B cell (primary cell): ENCODE measurements at regions of chr20 and their contacts with region 1.

Region 1: GRCh38 chr20:833450-834150 is at the start of gene FAM110A:
- DNase-seq: peak; percentile 98
- ATAC-seq: peak; percentile 93
- H3K4me3 ChIP-seq: peak within 1 kb of the TSS; percentile 72 to 95 (median 88)
- H3K4me3 Mint-ChIP-seq: peak within 1 kb of the TSS; percentile 81
- H3K27ac ChIP-seq: peak within 1 kb of the TSS; percentile 81 to 96
- H3K27ac Mint-ChIP-seq: peak within 1 kb of the TSS; percentile 87
- H3K4me1 ChIP-seq: peaks cover 31% of the 10 kb centered on the region in 2 donors
- H3K4me1 Mint-ChIP-seq: peaks cover 37% of the 10 kb centered on the region
- H3K27me3 ChIP-seq: no peaks in the 10 kb centered on the region
- H3K27me3 Mint-ChIP-seq: no peaks in the 10 kb centered on the region
- CTCF ChIP-seq: no peak
- total RNA-seq, gene FAM110A: 18.4 and 19.6 TPM in 2 replicates

Region 2: DNA sequence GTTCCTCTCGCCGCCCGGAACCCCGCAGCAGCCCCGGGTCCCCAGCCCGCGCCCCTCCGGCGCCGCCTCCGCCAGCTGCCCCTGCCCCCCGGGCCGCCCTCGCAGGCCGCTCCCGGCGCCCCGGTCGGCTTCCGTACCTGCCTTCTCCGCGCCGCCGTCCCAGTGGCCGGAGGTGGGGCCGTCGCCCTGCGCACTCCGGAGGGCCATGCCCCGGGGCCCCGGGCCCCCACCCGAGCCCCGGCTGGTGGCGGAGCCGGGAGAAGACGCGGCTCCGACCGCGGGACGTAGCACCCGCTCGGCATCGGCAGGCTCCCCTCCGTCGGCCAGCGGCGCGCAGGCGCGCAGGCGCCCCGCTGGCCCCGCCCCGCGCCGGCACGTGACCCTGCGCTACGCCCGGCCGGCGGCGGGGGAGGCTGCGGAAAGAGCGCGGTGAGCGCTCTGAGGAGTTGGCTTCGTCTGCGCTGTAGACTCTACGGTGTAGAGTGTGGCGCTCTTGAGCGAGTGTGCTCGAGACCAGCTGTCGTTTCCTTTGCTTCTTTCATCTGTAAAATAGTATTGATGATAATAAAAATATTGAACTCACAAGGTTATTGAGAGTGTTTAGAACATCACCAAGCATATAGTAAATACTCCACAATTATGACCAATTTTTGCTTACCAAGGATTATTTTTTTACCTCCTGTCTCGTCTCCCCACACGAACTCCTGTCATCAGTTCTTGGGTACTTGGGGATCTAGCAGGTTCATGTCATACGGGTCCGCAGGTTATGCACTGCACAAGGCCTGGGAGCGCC is 371.2 kb before region 1 on chr20 and contains the start of gene TBC1D20:
- CTCF ChIA-PET with region 1: no interaction called
- POLR2A ChIA-PET with region 1: no interaction called
- intact Hi-C with region 1: loop called (anchors 2 kb)
- DNase-seq: peak; percentile 94
- ATAC-seq: peak; percentile 95
- H3K4me3 ChIP-seq: peak within 1 kb of the TSS; percentile 58 to 83 (median 76)
- H3K4me3 Mint-ChIP-seq: peak within 1 kb of the TSS; percentile 94
- H3K27ac ChIP-seq: peak within 1 kb of the TSS; percentile 61 to 85
- H3K27ac Mint-ChIP-seq: peak within 1 kb of the TSS; percentile 95
- H3K4me1 ChIP-seq: peaks cover 14 to 17% of the 10 kb centered on the region in 2 donors
- H3K4me1 Mint-ChIP-seq: peaks cover 37% of the 10 kb centered on the region
- H3K27me3 ChIP-seq: peaks cover 0 to 1% (median 0%) of the 10 kb centered on the region in 4 experiments
- H3K27me3 Mint-ChIP-seq: peaks cover 3% of the 10 kb centered on the region
- CTCF ChIP-seq: no peak
- total RNA-seq, gene TBC1D20: 37.9 and 40.0 TPM in 2 replicates

Region 3: GRCh38 chr20:653110-653589 is 180.4 kb before region 1 on chr20 and contains the start of gene SRXN1:
- CTCF ChIA-PET with region 1: no interaction called
- POLR2A ChIA-PET with region 1: no interaction called
- intact Hi-C with region 1: loop called (anchors 2 kb)
- DNase-seq: peak; percentile 83
- ATAC-seq: peak; percentile 94
- H3K4me3 ChIP-seq: peak within 1 kb of the TSS; percentile 41 to 67 (median 53)
- H3K4me3 Mint-ChIP-seq: peak within 1 kb of the TSS; percentile 79
- H3K27ac ChIP-seq: no peak within 1 kb of the TSS
- H3K27ac Mint-ChIP-seq: peak within 1 kb of the TSS; percentile 69
- H3K4me1 ChIP-seq: peaks cover 10 to 18% of the 10 kb centered on the region in 2 donors
- H3K4me1 Mint-ChIP-seq: peaks cover 20% of the 10 kb centered on the region
- H3K27me3 ChIP-seq: peaks cover 0 to 8% (median 0%) of the 10 kb centered on the region in 4 experiments
- H3K27me3 Mint-ChIP-seq: peaks cover 10% of the 10 kb centered on the region
- CTCF ChIP-seq: peak; percentile 70
- total RNA-seq, gene SRXN1: 3.7 and 4.5 TPM in 2 replicates

Region 4: GRCh38 chr20:815914-816606 is 17.5 kb before region 1 on chr20:
- CTCF ChIA-PET with region 1: interaction called, 30 read pairs
- POLR2A ChIA-PET with region 1: no interaction called
- intact Hi-C with region 1: no loop called
- DNase-seq: peak; percentile 80
- ATAC-seq: peak; percentile 78
- H3K4me3 ChIP-seq: no peak overlapping the region
- H3K4me3 Mint-ChIP-seq: no peak overlapping the region
- H3K27ac ChIP-seq: no peak overlapping the region
- H3K27ac Mint-ChIP-seq: no peak overlapping the region
- H3K4me1 ChIP-seq: peaks cover 0 to 3% of the 10 kb centered on the region in 2 donors
- H3K4me1 Mint-ChIP-seq: no peaks in the 10 kb centered on the region
- H3K27me3 ChIP-seq: no peaks in the 10 kb centered on the region
- H3K27me3 Mint-ChIP-seq: peaks cover 27% of the 10 kb centered on the region
- CTCF ChIP-seq: peak; percentile 99

Region 5: GRCh38 chr20:844473-845225 is 11.0 kb after region 1 on chr20:
- CTCF ChIA-PET with region 1: interaction called, 46 read pairs
- POLR2A ChIA-PET with region 1: interaction called, 15 read pairs
- intact Hi-C with region 1: loop called (anchors 1 kb)
- DNase-seq: peak; percentile 92
- ATAC-seq: peak; percentile 98
- H3K4me3 ChIP-seq: peak overlapping the region in 4 of 5 experiments; percentile 65 to 77 (median 68)
- H3K4me3 Mint-ChIP-seq: peak overlapping the region; percentile 86
- H3K27ac ChIP-seq: peak overlapping the region; percentile 10 to 80
- H3K27ac Mint-ChIP-seq: peak overlapping the region; percentile 71
- H3K4me1 ChIP-seq: peaks cover 64% of the 10 kb centered on the region in 2 donors
- H3K4me1 Mint-ChIP-seq: peaks cover 60% of the 10 kb centered on the region
- H3K27me3 ChIP-seq: peaks cover 0 to 19% (median 6%) of the 10 kb centered on the region in 4 experiments
- H3K27me3 Mint-ChIP-seq: peaks cover 4% of the 10 kb centered on the region
- CTCF ChIP-seq: no peak

Region 6: DNA sequence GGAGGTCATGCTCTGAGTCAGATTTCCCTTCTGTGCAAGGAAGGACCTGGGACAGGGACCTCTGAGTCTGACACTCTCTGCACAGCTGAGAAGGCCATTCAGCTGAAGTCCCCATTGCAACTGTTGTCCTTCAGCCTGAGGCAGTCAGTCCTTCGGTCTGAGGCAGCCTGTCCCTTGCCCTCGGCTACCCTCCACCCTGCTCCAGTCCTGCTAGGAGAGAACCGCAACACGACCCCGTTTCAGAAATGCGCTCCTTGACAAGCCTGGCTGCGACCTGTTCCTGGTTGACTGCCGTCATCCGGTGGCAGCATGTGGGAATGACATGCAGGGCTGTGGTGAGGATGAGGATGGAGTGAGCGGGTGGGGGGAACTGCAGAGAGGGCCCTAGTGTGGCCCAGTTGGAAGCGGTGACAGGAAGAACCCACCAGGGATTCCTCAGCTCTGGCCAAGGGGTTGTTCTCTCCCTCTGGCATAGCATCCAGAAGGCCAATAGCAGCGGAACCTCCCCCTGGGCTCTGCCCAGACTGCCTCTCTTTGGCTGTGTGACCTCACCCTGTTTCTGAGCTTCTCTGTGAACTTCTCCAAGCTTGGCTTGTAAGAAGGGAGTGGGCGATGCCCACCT is 122.8 kb after region 1 on chr20:
- CTCF ChIA-PET with region 1: interaction called, 59 read pairs
- POLR2A ChIA-PET with region 1: no interaction called
- intact Hi-C with region 1: no loop called
- DNase-seq: peak; percentile 84
- ATAC-seq: peak; percentile 88
- H3K4me3 ChIP-seq: no peak overlapping the region
- H3K4me3 Mint-ChIP-seq: no peak overlapping the region
- H3K27ac ChIP-seq: no peak overlapping the region
- H3K27ac Mint-ChIP-seq: no peak overlapping the region
- H3K4me1 ChIP-seq: peaks cover 4 to 5% of the 10 kb centered on the region in 2 donors
- H3K4me1 Mint-ChIP-seq: peaks cover 2% of the 10 kb centered on the region
- H3K27me3 ChIP-seq: peaks cover 0 to 30% (median 1%) of the 10 kb centered on the region in 4 experiments
- H3K27me3 Mint-ChIP-seq: peaks cover 43% of the 10 kb centered on the region
- CTCF ChIP-seq: peak; percentile 99

Region 7: GRCh38 chr20:1118336-1119127 is 284.9 kb after region 1 on chr20 and contains the start of gene PSMF1:
- CTCF ChIA-PET with region 1: no interaction called
- POLR2A ChIA-PET with region 1: interaction called, 8 read pairs
- intact Hi-C with region 1: loop called (anchors 2 kb)
- DNase-seq: peak; percentile 97
- ATAC-seq: peak; percentile 94
- H3K4me3 ChIP-seq: peak within 1 kb of the TSS; percentile 78 to 97 (median 85)
- H3K4me3 Mint-ChIP-seq: peak within 1 kb of the TSS; percentile 91
- H3K27ac ChIP-seq: peak within 1 kb of the TSS; percentile 70 to 91
- H3K27ac Mint-ChIP-seq: peak within 1 kb of the TSS; percentile 93
- H3K4me1 ChIP-seq: peaks cover 42 to 53% of the 10 kb centered on the region in 2 donors
- H3K4me1 Mint-ChIP-seq: peaks cover 62% of the 10 kb centered on the region
- H3K27me3 ChIP-seq: no peaks in the 10 kb centered on the region
- H3K27me3 Mint-ChIP-seq: no peaks in the 10 kb centered on the region
- CTCF ChIP-seq: no peak
- total RNA-seq, gene PSMF1: 113 and 114 TPM in 2 replicates

Region 8: DNA sequence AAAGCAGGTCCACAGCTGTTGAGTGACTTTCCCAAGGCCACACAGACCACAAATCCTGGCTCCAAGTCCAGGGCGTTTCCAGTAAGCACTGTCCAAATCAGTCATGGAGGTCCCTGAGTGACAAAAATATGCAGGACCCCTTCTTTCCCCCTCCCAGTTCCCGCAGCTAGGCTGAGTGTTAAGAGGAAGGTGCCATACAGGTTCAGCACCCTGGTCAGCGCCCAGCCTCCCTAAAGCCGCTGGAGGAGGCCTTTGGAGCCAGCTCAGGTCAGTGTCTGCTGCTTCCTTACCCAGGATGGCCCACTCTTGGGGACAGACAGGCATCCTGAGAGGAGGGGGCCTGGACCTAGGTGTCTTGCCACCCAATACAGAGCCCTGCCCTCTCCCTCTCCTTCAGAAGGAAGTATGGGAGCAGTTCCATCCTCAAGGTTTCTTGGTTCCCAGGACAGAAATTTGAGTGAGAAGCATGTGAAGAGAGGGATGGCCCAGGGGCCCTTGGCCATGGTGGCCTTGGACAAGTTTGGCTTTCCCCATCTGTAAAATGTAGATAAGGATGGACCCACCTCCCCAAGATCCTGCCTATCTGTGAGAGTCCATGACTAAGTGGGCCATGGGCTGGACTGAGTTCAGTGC is 338.0 kb after region 1 on chr20:
- CTCF ChIA-PET with region 1: no interaction called
- POLR2A ChIA-PET with region 1: no interaction called
- intact Hi-C with region 1: no loop called
- DNase-seq: no peak
- ATAC-seq: no peak
- H3K4me3 ChIP-seq: no peak overlapping the region
- H3K4me3 Mint-ChIP-seq: no peak overlapping the region
- H3K27ac ChIP-seq: no peak overlapping the region
- H3K27ac Mint-ChIP-seq: no peak overlapping the region
- H3K4me1 ChIP-seq: no peaks in the 10 kb centered on the region
- H3K4me1 Mint-ChIP-seq: no peaks in the 10 kb centered on the region
- H3K27me3 ChIP-seq: no peaks in the 10 kb centered on the region
- H3K27me3 Mint-ChIP-seq: no peaks in the 10 kb centered on the region
- CTCF ChIP-seq: no peak